AG04449 (cell line): ENCODE measurements at regions of chr3 and their contacts with region 1.

Region 1: GRCh38 chr3:49839193-49839809 is 17.1 kb downstream of the TRAIP start:
- DNase-seq: peak; percentile 19
- H3K4me3 ChIP-seq: no peak overlapping the region
- CTCF ChIP-seq: peak; percentile 83

Region 2: GRCh38 chr3:49484471-49484870 is 354.8 kb before region 1 on chr3:
- CTCF ChIA-PET with region 1: no interaction called
- POLR2A ChIA-PET with region 1: no interaction called
- DNase-seq: no peak
- H3K4me3 ChIP-seq: no peak overlapping the region
- CTCF ChIP-seq: no peak

Region 3: GRCh38 chr3:49712631-49713319 is 126.5 kb before region 1 on chr3:
- CTCF ChIA-PET with region 1: interaction called, 12 read pairs
- POLR2A ChIA-PET with region 1: no interaction called
- DNase-seq: no peak
- H3K4me3 ChIP-seq: no peak overlapping the region
- CTCF ChIP-seq: no peak

Region 4: GRCh38 chr3:49786241-49786958 is 52.9 kb before region 1 on chr3 and contains the start of gene IP6K1:
- CTCF ChIA-PET with region 1: interaction called, 12 read pairs
- POLR2A ChIA-PET with region 1: no interaction called
- DNase-seq: peak; percentile 98
- H3K4me3 ChIP-seq: peak within 1 kb of the TSS; percentile 76
- CTCF ChIP-seq: no peak

Region 5: DNA sequence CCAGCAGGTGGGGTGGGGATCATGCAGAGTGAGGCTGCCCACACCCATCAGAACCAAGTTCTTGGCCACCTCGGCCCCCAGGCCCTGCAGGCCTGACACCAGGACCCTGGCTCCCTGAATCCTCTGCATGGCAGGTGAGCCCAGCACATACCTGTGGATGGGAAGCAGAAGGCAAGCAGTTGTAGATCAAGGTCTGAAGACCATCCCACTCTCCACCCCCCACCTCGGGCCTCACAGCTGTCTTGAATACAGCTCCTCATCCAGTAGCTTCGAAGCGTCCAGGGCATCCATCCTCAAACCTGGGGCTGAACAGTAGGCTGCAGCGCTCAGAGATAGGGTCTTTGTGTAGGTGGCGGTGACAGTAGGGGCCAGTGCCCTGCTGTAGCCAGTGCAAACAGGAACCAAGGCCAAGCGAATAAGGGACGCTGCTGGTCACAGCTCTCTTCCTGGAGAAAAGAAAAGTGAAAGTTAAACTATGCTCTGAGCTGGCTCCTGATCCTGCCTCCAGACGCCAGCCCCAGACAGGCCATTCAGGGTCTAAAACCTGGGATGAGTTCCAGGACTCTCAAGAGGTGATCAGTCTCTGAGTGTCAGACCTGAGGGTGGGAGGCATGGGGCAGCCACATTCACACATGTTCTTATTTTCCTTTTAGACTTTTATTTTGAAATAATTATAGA is 25.7 kb before region 1 on chr3 and contains the start of gene UBA7:
- CTCF ChIA-PET with region 1: interaction called, 507 read pairs
- POLR2A ChIA-PET with region 1: no interaction called
- DNase-seq: no peak
- H3K4me3 ChIP-seq: peak within 1 kb of the TSS; percentile 58
- CTCF ChIP-seq: no peak

Region 6: GRCh38 chr3:49856181-49857005 is 17.1 kb after region 1 on chr3 and contains the start of gene TRAIP:
- CTCF ChIA-PET with region 1: interaction called, 57 read pairs
- POLR2A ChIA-PET with region 1: no interaction called
- DNase-seq: peak; percentile 45
- H3K4me3 ChIP-seq: peak within 1 kb of the TSS; percentile 88
- CTCF ChIP-seq: no peak